IMR-90 (cell line): ENCODE measurements at regions of chr19 and their contacts with region 1.

Region 1: DNA sequence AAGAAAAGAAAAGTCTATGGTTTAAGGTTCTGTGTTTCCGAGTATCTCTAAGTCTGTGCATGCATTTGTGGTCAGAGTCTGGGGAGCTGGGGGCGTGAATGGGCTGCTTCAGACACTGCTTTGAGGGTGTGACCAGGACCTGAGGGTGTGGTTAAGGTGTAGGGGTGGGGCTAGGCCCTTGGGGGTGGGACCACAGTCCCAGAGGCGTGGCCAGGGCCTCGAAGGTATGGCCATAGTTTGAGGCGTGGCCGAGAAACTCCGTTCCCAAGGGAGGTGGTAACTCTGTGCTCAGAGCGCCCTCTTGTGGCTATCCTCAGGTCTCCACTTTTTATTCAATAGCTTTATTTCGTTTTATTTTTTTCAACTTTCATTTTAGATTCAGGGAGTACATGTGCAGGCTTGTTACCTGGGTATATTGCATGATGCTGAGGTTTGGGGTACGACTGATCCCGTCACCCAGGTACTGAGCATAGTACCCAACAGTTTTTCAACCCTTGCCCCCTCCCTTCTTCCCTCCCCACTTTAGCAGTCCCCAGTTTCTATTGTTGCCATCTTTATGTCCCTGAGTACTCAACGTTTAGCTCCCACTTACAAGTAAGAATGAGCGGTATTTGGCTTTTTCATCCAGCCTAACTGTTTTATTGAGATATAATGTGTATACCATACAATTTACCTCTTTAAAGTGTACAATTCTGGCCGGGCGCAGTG is 7.0 kb upstream of the CBLC start:
- DNase-seq: peak; percentile 91
- ATAC-seq: peak; percentile 93
- H3K4me3 ChIP-seq: no peak overlapping the region
- H3K27ac ChIP-seq: peak overlapping the region; percentile 59
- H3K4me1 ChIP-seq: peaks cover 12% of the 10 kb centered on the region
- H3K27me3 ChIP-seq: no peaks in the 10 kb centered on the region
- CTCF ChIP-seq: peak; percentile 95
- POLR2A ChIP-seq: no peak
- RAD21 ChIP-seq: peak; percentile 95

Region 2: DNA sequence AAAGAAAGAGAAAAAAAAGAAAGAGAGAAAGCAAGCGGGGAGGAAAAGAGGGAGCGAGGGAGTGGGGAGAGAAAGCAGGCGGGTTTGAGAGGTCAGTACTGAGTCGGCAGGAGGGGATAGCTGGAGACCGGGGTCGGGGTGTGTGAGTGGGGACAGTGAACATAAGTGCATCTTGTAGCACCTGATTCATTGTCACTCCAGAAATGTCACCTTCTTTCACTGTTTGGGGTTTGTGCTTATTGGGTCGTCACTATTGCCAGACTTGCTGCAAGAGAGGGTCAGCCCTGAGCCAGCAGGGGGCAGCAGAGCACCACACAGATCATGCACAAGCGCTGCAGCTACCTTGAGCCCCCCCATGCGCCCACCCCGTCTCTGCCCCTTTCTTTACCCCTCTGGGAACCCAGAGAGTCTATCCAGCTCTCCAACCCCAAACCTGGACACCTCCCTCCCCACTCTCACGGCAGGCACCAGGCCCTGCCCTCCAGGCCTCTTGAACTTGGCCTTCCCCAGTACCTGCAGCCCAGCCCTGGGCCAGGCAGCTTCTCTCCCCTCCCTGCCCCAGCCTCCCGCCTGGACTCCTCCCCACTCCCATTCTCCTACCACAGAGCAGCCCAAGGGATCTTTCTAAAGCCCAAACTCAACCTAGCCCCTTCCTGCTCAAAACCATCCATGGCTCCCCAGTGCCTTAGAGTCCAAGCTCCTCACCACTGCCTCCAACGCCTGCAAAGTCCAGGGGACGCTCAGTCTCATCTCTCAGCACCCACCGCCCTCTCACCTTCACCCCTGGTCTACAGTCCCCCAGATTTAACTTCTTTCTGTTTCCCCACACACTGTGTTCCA is 81.4 kb before region 1 on chr19:
- CTCF ChIA-PET with region 1: interaction called, 8 read pairs
- POLR2A ChIA-PET with region 1: no interaction called
- dilution Hi-C with region 1: no loop called
- in situ Hi-C with region 1: no loop called
- intact Hi-C with region 1: loop called (anchors 1 kb)
- DNase-seq: peak; percentile 72
- ATAC-seq: peak; percentile 62
- H3K4me3 ChIP-seq: no peak overlapping the region
- H3K27ac ChIP-seq: no peak overlapping the region
- H3K4me1 ChIP-seq: peaks cover 8% of the 10 kb centered on the region
- H3K27me3 ChIP-seq: no peaks in the 10 kb centered on the region
- CTCF ChIP-seq: peak; percentile 86
- POLR2A ChIP-seq: no peak
- RAD21 ChIP-seq: peak; percentile 82